Activated CD4-positive, alpha-beta T cell treated with anti-CD3 and anti-CD28 coated beads for 36 hours (primary cell): ENCODE measurements at regions of chr6 and their contacts with region 1.

Region 1: GRCh38 chr6:142146828-142147662 is at the starts of genes NMBR and VTA1:
- DNase-seq: peak; percentile 98
- ATAC-seq: peak; percentile 98
- H3K4me3 Mint-ChIP-seq: peak within 1 kb of the TSS; percentile 97
- H3K27ac Mint-ChIP-seq: peak within 1 kb of the TSS; percentile 95
- H3K4me1 Mint-ChIP-seq: peaks cover 56% of the 10 kb centered on the region
- H3K27me3 Mint-ChIP-seq: no peaks in the 10 kb centered on the region
- total RNA-seq, gene NMBR: not detected
- total RNA-seq, gene VTA1: 55.6 to 73.9 TPM

Region 2: DNA sequence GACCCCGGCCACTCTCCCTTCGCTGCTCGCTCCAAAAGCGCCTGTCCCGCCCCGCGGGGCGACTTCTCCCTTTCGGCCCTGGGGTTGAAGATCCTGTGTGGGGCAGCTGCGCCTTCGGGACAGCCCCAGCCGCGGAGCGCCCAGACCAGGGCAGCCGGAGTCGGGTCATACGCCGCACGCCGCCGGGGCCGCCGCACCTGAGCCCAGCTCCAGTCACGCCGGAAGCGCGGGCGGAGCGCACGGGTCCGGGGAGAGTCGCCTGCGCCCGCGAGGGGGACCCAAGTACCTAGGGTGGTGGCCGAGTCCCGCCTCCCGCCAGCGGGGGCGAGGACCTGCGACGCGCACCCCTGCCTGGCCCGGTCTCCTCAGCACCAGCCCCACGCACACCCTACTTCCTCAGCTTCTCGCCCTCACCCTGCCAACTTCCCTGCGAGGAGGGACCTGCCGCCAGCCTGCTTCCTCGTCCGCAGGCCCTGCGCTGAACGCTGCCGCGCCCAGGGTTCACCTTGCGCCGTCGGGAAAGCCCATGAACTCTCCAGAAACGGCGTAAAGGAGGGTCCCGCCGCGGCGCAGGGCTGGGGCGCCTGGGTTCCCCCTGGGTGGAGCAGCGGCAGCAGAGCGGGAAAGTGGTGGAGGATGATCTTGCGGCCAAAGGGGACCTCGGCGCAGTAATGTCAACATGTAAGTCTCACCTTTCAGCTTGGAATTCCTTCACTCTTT is 154.8 kb after region 1 on chr6 and contains the start of gene ADGRG6:
- CTCF ChIA-PET with region 1: no interaction called
- POLR2A ChIA-PET with region 1: no interaction called
- intact Hi-C with region 1: loop called in 1 of 2 experiments (anchors 5 kb)
- DNase-seq: peak; percentile 71
- ATAC-seq: peak; percentile 89
- H3K4me3 Mint-ChIP-seq: peak within 1 kb of the TSS; percentile 75
- H3K27ac Mint-ChIP-seq: peak within 1 kb of the TSS; percentile 64
- H3K4me1 Mint-ChIP-seq: peaks cover 8% of the 10 kb centered on the region
- H3K27me3 Mint-ChIP-seq: peaks cover 25% of the 10 kb centered on the region
- total RNA-seq, gene ADGRG6: 0.26 to 0.43 TPM

Region 3: GRCh38 chr6:142377112-142377848 is 230.2 kb after region 1 on chr6:
- CTCF ChIA-PET with region 1: no interaction called
- POLR2A ChIA-PET with region 1: no interaction called
- intact Hi-C with region 1: no loop called
- DNase-seq: no peak
- ATAC-seq: no peak
- H3K4me3 Mint-ChIP-seq: no peak overlapping the region
- H3K27ac Mint-ChIP-seq: no peak overlapping the region
- H3K4me1 Mint-ChIP-seq: no peaks in the 10 kb centered on the region
- H3K27me3 Mint-ChIP-seq: peaks cover 7% of the 10 kb centered on the region

Region 4: GRCh38 chr6:142387997-142388815 is 241.2 kb after region 1 on chr6:
- CTCF ChIA-PET with region 1: no interaction called
- POLR2A ChIA-PET with region 1: no interaction called
- intact Hi-C with region 1: loop called (anchors 1 to 2 kb)
- DNase-seq: no peak
- ATAC-seq: peak; percentile 51
- H3K4me3 Mint-ChIP-seq: no peak overlapping the region
- H3K27ac Mint-ChIP-seq: no peak overlapping the region
- H3K4me1 Mint-ChIP-seq: peaks cover 5% of the 10 kb centered on the region
- H3K27me3 Mint-ChIP-seq: no peaks in the 10 kb centered on the region

Region 5: GRCh38 chr6:142537612-142538478 is 390.8 kb after region 1 on chr6:
- CTCF ChIA-PET with region 1: no interaction called
- POLR2A ChIA-PET with region 1: no interaction called
- intact Hi-C with region 1: loop called (anchors 2 to 10 kb)
- DNase-seq: peak; percentile 52
- ATAC-seq: no peak
- H3K4me3 Mint-ChIP-seq: no peak overlapping the region
- H3K27ac Mint-ChIP-seq: no peak overlapping the region
- H3K4me1 Mint-ChIP-seq: peaks cover 2% of the 10 kb centered on the region
- H3K27me3 Mint-ChIP-seq: no peaks in the 10 kb centered on the region